ENCODE measurements at regions of chr6 and their contacts with region 1.

Region 1: GRCh38 chr6:22145823-22146677 is 150.8 kb downstream of the PRL start:
- DNase-seq: peak; percentile 75
- H3K4me3 ChIP-seq: peak overlapping the region; percentile 61 to 75
- H3K27ac ChIP-seq: peak overlapping the region; percentile 61 to 99
- H3K4me1 ChIP-seq: peaks cover 16 to 41% of the 10 kb centered on the region in 2 experiments; a peak in 3 of 4 replicates
- H3K27me3 ChIP-seq: no peaks in the 10 kb centered on the region
- CTCF ChIP-seq: peak; percentile 55
- EP300 ChIP-seq: peak in 1 of 2 experiments; percentile 45; a peak in 1 of 4 replicates
- RAD21 ChIP-seq: peak; percentile 76

Region 2: GRCh38 chr6:21731411-21732031 is 414.5 kb before region 1 on chr6:
- CTCF ChIA-PET with region 1: no interaction called
- POLR2A ChIA-PET with region 1: no interaction called
- DNase-seq: no peak
- H3K4me3 ChIP-seq: no peak overlapping the region
- H3K27ac ChIP-seq: peak overlapping the region in 1 of 2 experiments; percentile 57; a peak in 2 of 4 replicates
- H3K4me1 ChIP-seq: peaks cover 11 to 13% of the 10 kb centered on the region in 2 experiments
- H3K27me3 ChIP-seq: no peaks in the 10 kb centered on the region
- CTCF ChIP-seq: no peak
- EP300 ChIP-seq: no peak
- RAD21 ChIP-seq: no peak

Region 3: GRCh38 chr6:21999012-21999528 is 147.0 kb before region 1 on chr6:
- CTCF ChIA-PET with region 1: interaction called, 10 read pairs
- POLR2A ChIA-PET with region 1: interaction called, 58 read pairs
- DNase-seq: peak; percentile 61
- H3K4me3 ChIP-seq: no peak overlapping the region
- H3K27ac ChIP-seq: peak overlapping the region; percentile 84 to 99
- H3K4me1 ChIP-seq: peaks cover 45 to 55% of the 10 kb centered on the region in 2 experiments
- H3K27me3 ChIP-seq: no peaks in the 10 kb centered on the region
- CTCF ChIP-seq: no peak
- EP300 ChIP-seq: peak; percentile 67 to 97; a peak in 3 of 4 replicates
- RAD21 ChIP-seq: peak; percentile 50

Region 4: GRCh38 chr6:22133357-22133756 is 12.7 kb before region 1 on chr6:
- CTCF ChIA-PET with region 1: no interaction called
- POLR2A ChIA-PET with region 1: no interaction called
- DNase-seq: no peak
- H3K4me3 ChIP-seq: no peak overlapping the region; a peak in 1 of 4 replicates
- H3K27ac ChIP-seq: no peak overlapping the region
- H3K4me1 ChIP-seq: peaks cover 0 to 2% of the 10 kb centered on the region in 2 experiments; a peak in 2 of 4 replicates
- H3K27me3 ChIP-seq: no peaks in the 10 kb centered on the region
- CTCF ChIP-seq: no peak
- EP300 ChIP-seq: no peak
- RAD21 ChIP-seq: no peak

Region 5: DNA sequence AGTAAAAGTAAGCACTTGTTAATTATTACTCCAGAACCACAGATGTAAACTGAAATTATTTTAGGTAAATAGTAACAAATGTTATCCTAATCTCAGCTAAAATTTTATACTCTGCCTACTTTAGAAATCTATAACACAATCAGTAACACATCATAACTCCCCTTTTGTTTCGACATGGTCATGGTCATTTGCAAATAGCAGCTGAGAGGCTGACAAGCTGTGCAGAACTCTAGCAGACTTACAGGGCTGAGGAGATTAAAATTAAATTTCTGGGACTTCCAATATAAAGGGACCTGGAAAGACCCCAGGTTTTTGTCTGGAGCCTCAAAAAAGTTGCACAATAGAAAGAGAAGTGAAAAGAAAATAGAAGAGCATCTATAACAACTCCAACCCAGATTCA is 62.0 kb after region 1 on chr6:
- CTCF ChIA-PET with region 1: no interaction called
- POLR2A ChIA-PET with region 1: no interaction called
- DNase-seq: no peak
- H3K4me3 ChIP-seq: no peak overlapping the region
- H3K27ac ChIP-seq: no peak overlapping the region
- H3K4me1 ChIP-seq: no peaks in the 10 kb centered on the region; a peak in 1 of 4 replicates
- H3K27me3 ChIP-seq: no peaks in the 10 kb centered on the region
- CTCF ChIP-seq: no peak
- EP300 ChIP-seq: no peak
- RAD21 ChIP-seq: no peak

Region 6: DNA sequence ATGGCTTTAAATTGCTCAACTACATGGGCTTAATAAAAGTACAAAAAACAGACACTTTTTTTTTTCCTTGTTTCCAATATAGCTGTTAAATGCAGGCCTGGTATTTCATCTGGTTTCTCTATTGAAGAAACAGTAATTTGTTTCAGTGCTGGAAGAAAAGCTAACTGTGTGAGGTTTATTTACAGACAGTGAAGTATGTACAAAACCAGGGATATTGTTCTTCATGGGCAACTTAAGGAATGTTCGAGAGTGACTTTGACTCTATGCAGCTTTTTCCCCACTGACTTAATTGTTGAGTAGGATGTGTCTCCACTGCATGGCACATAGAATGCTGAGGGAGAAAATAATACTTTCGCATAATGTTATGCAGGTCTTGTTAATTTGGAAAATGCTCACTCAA is 181.8 kb after region 1 on chr6:
- CTCF ChIA-PET with region 1: interaction called, 7 read pairs
- POLR2A ChIA-PET with region 1: interaction called, 36 read pairs
- DNase-seq: no peak
- H3K4me3 ChIP-seq: no peak overlapping the region
- H3K27ac ChIP-seq: peak overlapping the region; percentile 39 to 98; a peak in 3 of 4 replicates
- H3K4me1 ChIP-seq: peaks cover 0 to 33% of the 10 kb centered on the region in 2 experiments; a peak in 2 of 4 replicates
- H3K27me3 ChIP-seq: no peaks in the 10 kb centered on the region
- CTCF ChIP-seq: no peak
- EP300 ChIP-seq: no peak
- RAD21 ChIP-seq: no peak; the same call in 1 of the 2 replicates

Region 7: GRCh38 chr6:22558334-22558747 is 412.3 kb after region 1 on chr6:
- CTCF ChIA-PET with region 1: interaction called, 4 read pairs
- POLR2A ChIA-PET with region 1: interaction called, 11 read pairs
- DNase-seq: peak; percentile 52
- H3K4me3 ChIP-seq: no peak overlapping the region
- H3K27ac ChIP-seq: peak overlapping the region in 1 of 2 experiments; percentile 96; a peak in 2 of 4 replicates
- H3K4me1 ChIP-seq: peaks cover 0 to 30% of the 10 kb centered on the region in 2 experiments; a peak in 2 of 4 replicates
- H3K27me3 ChIP-seq: no peaks in the 10 kb centered on the region
- CTCF ChIP-seq: no peak
- EP300 ChIP-seq: peak; percentile 37 to 98; a peak in 3 of 4 replicates
- RAD21 ChIP-seq: peak; percentile 37

Region 8: DNA sequence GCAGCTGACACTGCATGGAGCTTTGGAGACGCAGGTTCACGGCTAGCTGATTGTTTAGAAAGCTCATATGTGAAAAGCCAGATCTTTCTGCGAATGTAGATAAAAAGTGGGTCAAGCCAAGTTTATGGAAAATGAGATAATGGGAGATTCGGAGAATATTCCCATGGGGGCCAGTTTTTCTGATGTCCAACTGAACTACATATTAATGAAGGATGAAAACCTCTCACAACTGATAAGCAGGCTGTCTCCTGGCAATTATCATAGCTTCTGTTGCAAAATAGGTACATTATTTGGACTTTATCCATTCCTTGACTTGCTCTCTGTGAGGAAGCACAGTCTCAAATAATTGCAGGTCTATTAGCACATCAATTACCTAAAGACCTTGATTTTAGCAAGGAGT is 444.4 kb after region 1 on chr6:
- CTCF ChIA-PET with region 1: no interaction called
- POLR2A ChIA-PET with region 1: interaction called, 11 read pairs
- DNase-seq: peak; percentile 39
- H3K4me3 ChIP-seq: no peak overlapping the region
- H3K27ac ChIP-seq: peak overlapping the region in 1 of 2 experiments; percentile 96; a peak in 2 of 4 replicates
- H3K4me1 ChIP-seq: peaks cover 0 to 10% of the 10 kb centered on the region in 2 experiments; a peak in 2 of 4 replicates
- H3K27me3 ChIP-seq: no peaks in the 10 kb centered on the region
- CTCF ChIP-seq: no peak
- EP300 ChIP-seq: peak in 1 of 2 experiments; percentile 97; a peak in 2 of 4 replicates
- RAD21 ChIP-seq: peak; percentile 43

Region 9: DNA sequence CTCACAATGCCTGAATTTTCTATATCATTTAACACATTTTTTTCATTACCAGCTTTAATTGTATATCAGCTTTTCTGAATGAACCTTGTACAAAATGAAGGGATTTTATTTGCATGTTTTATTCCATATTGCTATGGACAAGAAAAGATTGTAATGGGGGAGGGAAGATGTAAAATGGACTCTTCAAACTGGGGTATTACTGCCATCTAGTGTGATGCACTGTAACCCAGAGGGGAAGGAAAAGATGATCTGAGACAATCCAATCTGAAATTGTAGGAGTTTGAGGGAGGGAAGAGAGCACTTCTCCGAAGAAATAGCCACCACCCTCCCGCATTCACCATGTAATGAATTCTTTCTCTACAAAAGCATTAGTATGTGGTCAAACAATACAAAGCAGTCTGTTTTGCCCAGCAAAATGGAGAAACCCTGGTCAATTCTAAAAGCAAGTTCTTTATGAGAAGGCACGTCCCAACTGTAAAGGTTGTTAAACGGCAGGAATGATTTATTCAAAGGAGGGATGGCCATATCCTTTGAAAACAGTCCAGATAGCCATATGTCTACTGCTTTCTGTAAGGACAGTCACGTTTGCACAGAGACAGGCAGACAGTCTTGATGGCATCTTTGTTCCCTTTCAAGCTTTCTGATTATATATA is 1300.5 kb after region 1 on chr6:
- CTCF ChIA-PET with region 1: interaction called, 7 read pairs
- POLR2A ChIA-PET with region 1: interaction called, 18 read pairs
- DNase-seq: peak; percentile 42
- H3K4me3 ChIP-seq: peak overlapping the region in 1 of 2 experiments; percentile 37; a peak in 1 of 4 replicates
- H3K27ac ChIP-seq: peak overlapping the region in 1 of 2 experiments; percentile 98; a peak in 3 of 4 replicates
- H3K4me1 ChIP-seq: peaks cover 8 to 37% of the 10 kb centered on the region in 2 experiments; a peak in 3 of 4 replicates
- H3K27me3 ChIP-seq: no peaks in the 10 kb centered on the region
- CTCF ChIP-seq: peak; percentile 73
- EP300 ChIP-seq: peak in 1 of 2 experiments; percentile 70; a peak in 2 of 4 replicates
- RAD21 ChIP-seq: peak; percentile 96